SK-N-SH (cell line): ENCODE measurements at regions of chr16 and their contacts with region 1.

Region 1: DNA sequence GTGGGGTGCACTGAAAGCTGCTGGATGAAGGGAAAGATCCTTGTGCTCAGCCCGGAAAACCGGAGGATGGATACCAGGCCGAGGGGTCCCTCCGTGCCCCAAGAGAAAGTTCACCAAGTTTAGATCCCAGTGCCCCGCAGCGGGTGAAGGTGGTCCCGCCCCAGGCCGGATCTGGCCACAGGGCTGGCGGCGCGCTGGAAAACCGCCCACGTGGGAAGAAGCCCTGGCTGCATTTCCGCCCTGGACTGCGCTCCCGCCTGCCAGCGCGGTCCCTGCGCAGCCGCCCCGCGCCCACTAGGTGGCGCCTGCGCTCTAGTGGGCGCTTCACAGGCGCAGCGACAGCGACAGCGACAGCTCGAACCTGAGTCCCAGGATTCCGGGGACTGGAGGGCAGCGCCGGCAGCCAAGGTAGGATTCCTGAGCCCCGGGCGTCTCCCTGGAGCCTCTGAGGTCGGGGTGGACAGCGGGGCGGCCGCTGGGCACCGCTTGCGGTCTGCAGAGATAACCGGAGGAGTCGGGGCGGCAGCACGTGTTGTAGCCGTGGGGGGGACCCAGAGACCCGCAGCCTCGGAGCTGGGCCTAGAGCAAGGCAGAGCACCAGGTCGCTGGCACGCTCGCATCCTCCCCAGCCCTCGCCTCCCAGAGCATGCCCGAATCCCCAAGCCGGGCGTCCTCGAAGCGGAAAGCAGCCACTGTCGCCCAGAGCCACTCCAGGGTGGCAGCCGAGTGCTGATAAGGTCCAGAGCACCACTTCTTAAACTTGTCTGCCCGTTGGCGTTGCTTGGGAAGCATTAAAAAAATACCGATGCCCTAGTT is at the start of gene CHD9:
- DNase-seq: peak; percentile 93
- H3K4me3 ChIP-seq: peak within 1 kb of the TSS; percentile 57 to 95
- H3K27ac ChIP-seq: peak within 1 kb of the TSS; percentile 88 to 91
- H3K4me1 ChIP-seq: peaks cover 12 to 14% of the 10 kb centered on the region in 2 experiments; a peak in 2 of 4 replicates
- H3K27me3 ChIP-seq: no peaks in the 10 kb centered on the region
- CTCF ChIP-seq: peak; percentile 92
- EP300 ChIP-seq: no peak; a peak in 1 of 4 replicates
- RAD21 ChIP-seq: peak; percentile 95
- polyA plus RNA-seq, gene CHD9: 6.2 and 9.2 TPM in 2 replicates

Region 2: DNA sequence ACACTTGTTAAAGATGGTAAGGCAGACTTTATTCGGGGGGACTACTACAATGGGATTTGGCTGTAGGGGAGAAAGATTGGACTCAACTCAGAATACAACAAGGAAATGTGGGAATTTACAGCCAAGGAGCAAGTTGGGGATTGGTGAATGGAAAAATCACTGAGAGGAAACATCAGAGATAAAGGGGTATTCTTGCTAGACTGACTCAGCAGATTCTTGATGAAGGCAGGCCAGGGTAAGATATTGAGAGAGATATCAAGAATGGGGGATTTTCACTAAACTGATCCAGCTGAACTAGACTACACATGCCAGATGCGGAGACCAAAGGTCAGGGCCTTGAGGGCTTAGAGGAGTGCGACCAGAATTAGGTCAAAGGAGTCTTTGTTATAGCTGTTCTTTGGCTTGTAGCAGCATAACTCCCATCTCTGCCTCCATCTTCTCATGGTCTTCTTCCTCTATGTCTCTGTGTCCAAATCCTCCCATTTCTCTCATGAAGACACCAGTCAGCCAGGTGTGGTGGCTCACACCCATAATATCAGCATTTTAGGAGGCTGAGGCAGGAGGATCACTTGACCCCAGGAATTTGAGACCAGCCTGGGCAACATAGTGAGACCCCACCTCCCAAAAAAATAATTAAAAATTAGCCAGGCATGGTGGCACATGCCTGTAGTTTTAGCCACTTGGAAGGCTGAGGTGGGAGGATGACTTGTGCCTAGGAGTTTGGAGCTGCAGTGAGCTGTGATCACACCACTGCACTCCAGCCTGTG is 19.5 kb before region 1 on chr16:
- CTCF ChIA-PET with region 1: interaction called, 10 read pairs
- POLR2A ChIA-PET with region 1: no interaction called
- DNase-seq: no peak
- H3K4me3 ChIP-seq: no peak overlapping the region
- H3K27ac ChIP-seq: no peak overlapping the region
- H3K4me1 ChIP-seq: no peaks in the 10 kb centered on the region
- H3K27me3 ChIP-seq: no peaks in the 10 kb centered on the region
- CTCF ChIP-seq: no peak
- EP300 ChIP-seq: no peak
- RAD21 ChIP-seq: no peak

Region 3: DNA sequence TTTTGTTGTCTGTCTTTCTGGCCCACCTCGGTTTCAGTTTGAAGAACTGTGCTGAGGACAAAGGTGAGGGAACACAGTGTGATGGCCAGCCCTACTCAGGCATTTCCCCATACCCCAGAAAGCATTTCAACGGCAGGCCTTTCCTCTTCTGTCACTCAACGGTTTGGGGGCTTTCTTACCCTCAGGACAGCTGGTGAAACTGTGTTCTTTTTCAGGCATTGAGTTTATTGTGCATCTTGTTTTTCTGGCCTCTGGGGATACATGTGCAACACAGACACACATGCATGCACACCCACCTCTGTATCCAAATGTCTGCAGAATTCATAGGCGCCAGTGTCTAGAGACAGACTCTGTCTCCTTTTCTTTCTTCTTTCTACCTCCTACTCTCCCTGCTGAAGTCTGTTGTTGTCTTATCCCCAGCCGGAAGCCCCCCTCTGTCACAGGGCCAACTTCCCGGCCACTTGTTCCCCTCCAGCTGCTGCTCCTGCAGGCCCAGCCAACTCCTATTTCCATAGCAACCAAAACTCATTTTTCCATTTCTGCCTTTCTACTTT is 16.9 kb after region 1 on chr16:
- CTCF ChIA-PET with region 1: interaction called, 25 read pairs
- POLR2A ChIA-PET with region 1: interaction called, 6 read pairs
- DNase-seq: peak; percentile 64
- H3K4me3 ChIP-seq: peak overlapping the region in 1 of 2 experiments; percentile 26; a peak in 2 of 4 replicates
- H3K27ac ChIP-seq: peak overlapping the region; percentile 48 to 94
- H3K4me1 ChIP-seq: peaks cover 6 to 8% of the 10 kb centered on the region in 2 experiments; a peak in 3 of 4 replicates
- H3K27me3 ChIP-seq: no peaks in the 10 kb centered on the region
- CTCF ChIP-seq: no peak
- EP300 ChIP-seq: peak in 1 of 2 experiments; percentile 27; a peak in 1 of 4 replicates
- RAD21 ChIP-seq: no peak

Region 4: DNA sequence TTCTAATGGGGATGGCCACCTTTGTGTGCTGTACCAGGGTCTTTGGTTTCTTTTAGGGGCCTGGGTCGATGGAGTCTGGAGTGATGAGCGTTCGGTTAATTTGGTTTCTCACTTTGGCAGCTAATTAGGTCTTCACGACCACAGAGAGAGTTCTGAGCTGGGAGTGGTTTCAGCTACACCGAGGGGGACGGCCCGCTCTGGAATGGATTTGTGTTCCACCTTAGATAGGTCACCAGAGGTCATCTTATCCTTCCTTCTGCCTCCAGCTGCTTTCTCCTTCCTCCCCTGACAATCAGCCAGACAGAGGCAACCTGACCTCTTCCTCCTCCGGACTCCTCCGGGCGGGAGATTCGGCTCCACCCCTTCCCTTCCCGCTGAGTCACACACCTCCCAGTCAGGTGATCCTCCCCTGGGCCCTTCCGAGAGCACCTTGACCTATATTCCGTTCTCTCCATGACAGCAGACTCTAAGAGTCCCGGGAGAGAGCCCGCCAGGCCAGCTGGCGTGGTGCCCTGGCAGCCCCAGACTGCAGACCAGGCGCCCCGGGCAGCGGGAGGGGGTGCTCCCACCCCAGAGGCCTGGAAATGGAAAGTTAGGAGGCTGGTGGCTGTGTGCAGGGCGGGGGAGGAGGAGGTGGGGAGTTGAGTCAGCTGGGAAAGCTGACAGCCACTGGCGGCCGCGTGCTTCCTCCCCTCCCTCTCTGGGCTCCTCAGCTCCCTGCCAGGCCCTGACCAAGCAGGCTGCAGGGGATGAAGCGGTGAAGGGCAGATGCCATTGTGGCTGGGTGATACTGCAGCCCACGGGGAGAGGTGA is 44.6 kb after region 1 on chr16:
- CTCF ChIA-PET with region 1: interaction called, 31 read pairs
- POLR2A ChIA-PET with region 1: interaction called, 18 read pairs
- DNase-seq: peak; percentile 89
- H3K4me3 ChIP-seq: peak overlapping the region; percentile 36 to 61
- H3K27ac ChIP-seq: peak overlapping the region; percentile 99
- H3K4me1 ChIP-seq: peaks cover 17 to 25% of the 10 kb centered on the region in 2 experiments
- H3K27me3 ChIP-seq: no peaks in the 10 kb centered on the region
- CTCF ChIP-seq: no peak
- EP300 ChIP-seq: peak; percentile 76 to 84
- RAD21 ChIP-seq: peak; percentile 27; the same call in 1 of the 2 replicates

Region 5: GRCh38 chr16:53142823-53143568 is 88.1 kb after region 1 on chr16:
- CTCF ChIA-PET with region 1: interaction called, 13 read pairs
- POLR2A ChIA-PET with region 1: no interaction called
- DNase-seq: no peak
- H3K4me3 ChIP-seq: no peak overlapping the region
- H3K27ac ChIP-seq: no peak overlapping the region
- H3K4me1 ChIP-seq: no peaks in the 10 kb centered on the region
- H3K27me3 ChIP-seq: no peaks in the 10 kb centered on the region
- CTCF ChIP-seq: no peak
- EP300 ChIP-seq: no peak
- RAD21 ChIP-seq: no peak

Region 6: DNA sequence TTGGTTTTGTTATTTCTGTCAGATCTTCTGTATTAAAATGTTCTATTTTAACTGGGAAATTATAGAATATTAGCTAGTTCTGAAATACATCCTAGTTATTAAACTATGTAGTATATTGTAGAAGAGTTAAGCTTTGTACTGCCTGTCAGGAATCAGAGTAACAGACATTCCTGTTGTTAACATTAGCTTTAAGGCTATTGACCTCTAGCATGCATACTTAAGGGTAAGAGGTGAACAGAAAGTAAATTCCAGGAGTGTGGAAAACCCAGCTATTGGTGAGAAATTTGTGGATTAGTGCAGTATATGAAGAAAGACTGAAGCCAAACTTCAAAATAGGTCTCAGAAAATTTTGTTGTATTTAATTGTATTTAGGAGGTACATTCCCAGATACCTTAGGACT is 111.2 kb after region 1 on chr16:
- CTCF ChIA-PET with region 1: interaction called, 17 read pairs
- POLR2A ChIA-PET with region 1: no interaction called
- DNase-seq: no peak
- H3K4me3 ChIP-seq: no peak overlapping the region
- H3K27ac ChIP-seq: peak overlapping the region in 1 of 2 experiments; percentile 23; a peak in 1 of 4 replicates
- H3K4me1 ChIP-seq: peaks cover 0 to 22% of the 10 kb centered on the region in 2 experiments; a peak in 2 of 4 replicates
- H3K27me3 ChIP-seq: no peaks in the 10 kb centered on the region
- CTCF ChIP-seq: no peak
- EP300 ChIP-seq: no peak
- RAD21 ChIP-seq: no peak